Activated T-helper 2 cell treated with anti-CD3 and anti-CD28 coated beads, Interferon-gamma antibody, Interleukin-2, Interleukin-4, amounts not matched to agents 10 μg/mL and 5 μg/mL and 100 μg/mL, durations not matched to agents 14 hours and 24 hours and 36 hours (primary cell): ENCODE measurements at regions of chr2 and their contacts with region 1.

Region 1: DNA sequence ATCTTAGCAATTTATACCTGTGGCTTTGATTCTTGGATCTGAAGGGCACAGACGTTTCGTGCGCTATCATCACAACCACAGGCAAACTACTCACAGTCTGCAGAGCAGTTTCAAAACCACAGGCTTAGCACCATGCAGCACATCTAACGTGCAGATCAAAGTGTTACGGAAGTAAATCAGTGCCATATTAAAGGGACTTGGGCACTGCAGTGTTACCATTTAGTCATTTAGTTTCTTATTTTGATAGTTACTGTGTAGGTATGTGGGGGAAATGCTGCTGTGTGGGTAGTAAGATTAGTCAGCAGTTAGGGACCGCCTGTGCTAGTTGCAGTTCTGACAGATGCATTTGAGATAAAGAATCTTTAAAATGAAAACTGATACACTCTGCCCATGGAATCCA is 384.0 kb downstream of the NBAS start:
- DNase-seq: peak; percentile 69
- H3K4me3 Mint-ChIP-seq: no peak overlapping the region
- H3K27ac Mint-ChIP-seq: peak overlapping the region; percentile 69
- H3K4me1 Mint-ChIP-seq: peaks cover 46% of the 10 kb centered on the region
- H3K27me3 Mint-ChIP-seq: peaks cover 34% of the 10 kb centered on the region

Region 2: GRCh38 chr2:15142069-15142873 is 34.8 kb before region 1 on chr2:
- intact Hi-C with region 1: loop called (anchors 1 kb)
- DNase-seq: peak; percentile 63
- H3K4me3 Mint-ChIP-seq: no peak overlapping the region
- H3K27ac Mint-ChIP-seq: peak overlapping the region; percentile 75
- H3K4me1 Mint-ChIP-seq: peaks cover 23% of the 10 kb centered on the region
- H3K27me3 Mint-ChIP-seq: no peaks in the 10 kb centered on the region

Region 3: DNA sequence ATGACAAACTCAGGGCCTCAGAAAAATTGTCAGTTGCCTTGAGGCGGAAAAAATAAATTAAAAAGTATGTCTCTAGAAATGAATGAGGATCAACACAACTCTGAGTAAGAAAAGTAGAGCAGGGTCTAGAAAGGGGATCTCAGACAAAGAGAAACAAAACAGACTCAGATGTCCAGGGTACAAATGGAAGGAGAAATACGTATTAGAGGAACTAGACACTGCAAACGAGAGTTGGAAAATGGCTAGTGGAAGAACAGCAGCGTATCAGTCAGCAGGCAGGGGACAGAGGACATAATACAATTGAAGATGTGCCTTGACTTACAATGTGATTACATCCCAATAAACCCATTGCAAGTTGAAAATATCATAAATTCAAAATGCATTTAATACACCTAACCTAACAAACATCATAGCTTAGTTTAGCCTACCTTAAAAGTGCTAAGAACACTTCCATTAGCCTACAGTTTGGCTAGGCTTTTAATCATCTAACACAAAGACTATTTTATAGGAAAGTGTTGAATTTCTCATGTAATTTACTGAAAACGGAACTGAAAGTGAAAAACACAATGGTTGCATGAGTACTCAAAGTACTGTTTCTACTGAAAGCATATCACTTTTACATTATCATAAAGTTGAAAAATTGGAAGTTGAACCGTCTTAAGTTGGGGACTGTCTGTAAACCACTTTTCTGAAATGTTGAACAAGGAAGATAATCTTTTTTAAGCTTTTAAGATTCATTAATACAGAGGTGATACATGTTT is 201.2 kb after region 1 on chr2:
- intact Hi-C with region 1: loop called (anchors 1 kb)
- DNase-seq: no peak
- H3K4me3 Mint-ChIP-seq: no peak overlapping the region
- H3K27ac Mint-ChIP-seq: peak overlapping the region; percentile 64
- H3K4me1 Mint-ChIP-seq: peaks cover 34% of the 10 kb centered on the region
- H3K27me3 Mint-ChIP-seq: no peaks in the 10 kb centered on the region

Region 4: DNA sequence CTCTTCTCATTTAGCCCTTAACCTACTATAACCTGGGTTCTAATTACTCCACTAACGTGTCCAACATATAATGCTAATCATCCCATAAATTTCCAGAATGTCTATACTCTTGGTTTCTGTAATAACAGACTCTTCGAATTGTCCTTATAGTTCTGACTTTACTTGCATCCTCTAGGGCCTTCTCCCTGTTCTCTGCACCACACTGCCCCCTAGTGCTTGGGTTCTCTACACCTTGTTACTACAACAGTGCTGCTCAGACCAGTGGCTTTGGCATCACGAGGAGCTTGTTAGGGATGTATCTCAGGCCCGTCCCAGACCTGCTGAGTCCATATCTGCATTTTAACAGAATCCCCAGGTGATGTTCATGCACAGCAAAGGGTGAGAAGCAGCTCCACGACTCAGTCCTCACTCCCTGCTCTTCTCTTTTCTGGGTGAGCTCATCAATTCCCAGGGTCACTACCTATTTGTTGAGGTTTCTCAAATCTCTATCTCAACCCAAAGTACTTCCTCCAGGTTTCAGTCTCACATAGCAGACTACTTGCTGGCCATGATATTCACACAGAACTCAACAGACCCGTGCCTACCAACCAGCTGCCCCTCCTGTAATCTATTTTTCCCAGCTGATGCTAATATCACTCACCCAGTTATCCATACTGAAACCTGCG is 400.1 kb after region 1 on chr2:
- intact Hi-C with region 1: loop called (anchors 5 kb)
- DNase-seq: peak; percentile 74
- H3K4me3 Mint-ChIP-seq: no peak overlapping the region
- H3K27ac Mint-ChIP-seq: no peak overlapping the region
- H3K4me1 Mint-ChIP-seq: no peaks in the 10 kb centered on the region
- H3K27me3 Mint-ChIP-seq: peaks cover 2% of the 10 kb centered on the region